HepG2 (cell line): ENCODE measurements at regions of chr9 and their contacts with region 1.

Region 1: DNA sequence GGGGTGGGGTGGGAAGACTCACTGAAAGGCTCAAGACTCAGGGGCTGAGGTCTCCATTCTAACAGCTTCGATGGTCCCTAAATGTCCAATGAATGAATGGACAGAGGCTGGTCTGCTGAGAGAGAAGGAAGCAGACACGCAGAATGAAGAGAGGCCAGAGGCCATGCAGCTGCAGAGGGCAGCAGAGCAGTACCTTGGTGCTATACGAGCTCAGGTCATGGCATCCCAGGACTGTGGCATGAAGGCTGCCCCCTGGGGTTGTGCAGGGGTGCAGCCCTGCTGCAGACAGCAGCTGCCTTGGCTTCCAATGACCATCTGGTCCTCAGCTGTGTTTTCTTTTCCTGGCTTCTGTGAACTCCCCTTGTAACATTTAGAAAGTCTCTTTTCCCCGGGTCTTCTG is 15.2 kb upstream of the CORO2A start:
- DNase-seq: no peak
- ATAC-seq: peak; percentile 29; the same call in 2 of the 3 replicates
- H3K4me3 ChIP-seq: no peak overlapping the region
- H3K27ac ChIP-seq: no peak overlapping the region
- H3K4me1 ChIP-seq: peaks cover 32% of the 10 kb centered on the region
- H3K27me3 ChIP-seq: no peaks in the 10 kb centered on the region
- CTCF ChIP-seq: peak; percentile 48
- EP300 ChIP-seq: no peak
- POLR2A ChIP-seq: no peak
- RAD21 ChIP-seq: no peak

Region 2: DNA sequence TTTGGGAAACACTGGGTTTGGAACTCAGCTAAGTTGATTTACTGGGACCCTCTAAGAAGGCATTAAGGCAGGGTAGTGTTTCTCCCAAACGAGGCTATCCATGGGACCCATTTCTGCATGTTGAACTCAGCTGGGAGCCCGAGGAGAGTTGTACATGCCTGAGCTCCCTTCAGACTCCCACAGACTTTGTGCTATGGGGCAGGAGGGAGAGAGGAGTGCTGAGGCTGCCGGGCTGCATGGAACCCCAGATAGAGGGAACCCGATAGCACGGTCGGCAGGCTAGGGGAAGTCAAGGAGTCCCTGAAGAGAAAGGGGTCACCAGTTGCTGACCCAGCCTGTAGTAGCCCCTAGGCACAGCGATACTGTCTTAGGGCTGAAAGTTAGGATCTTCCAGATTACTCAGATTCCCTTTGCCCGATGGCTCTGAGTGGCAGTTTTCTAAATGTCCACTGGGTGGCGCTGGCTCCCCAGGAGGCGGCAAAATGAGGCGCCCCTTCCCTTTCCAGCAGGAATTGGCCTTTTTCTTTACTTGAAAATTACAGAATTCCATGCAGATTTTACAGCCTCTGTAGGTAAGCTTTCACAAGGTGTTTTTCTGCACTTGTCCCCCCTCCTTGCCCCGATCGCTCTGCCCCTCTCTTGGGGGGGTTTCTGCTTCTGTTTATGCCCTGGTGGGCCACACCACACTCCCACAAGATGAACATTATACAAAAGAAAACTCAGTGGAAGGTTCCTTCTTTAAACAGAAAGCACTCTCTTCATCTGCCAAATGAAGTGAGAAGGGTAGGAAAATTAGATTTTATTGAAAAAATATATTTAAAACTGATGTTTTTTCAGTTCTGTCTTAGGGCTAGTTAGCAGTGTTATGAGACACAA is 133.3 kb before region 1 on chr9:
- CTCF ChIA-PET with region 1: interaction called, 7 read pairs
- POLR2A ChIA-PET with region 1: no interaction called
- in situ Hi-C with region 1: no loop called
- intact Hi-C with region 1: loop called (anchors 5 kb)
- DNase-seq: peak; percentile 36
- ATAC-seq: peak; percentile 73
- H3K4me3 ChIP-seq: no peak overlapping the region
- H3K27ac ChIP-seq: peak overlapping the region; percentile 29
- H3K4me1 ChIP-seq: peaks cover 42% of the 10 kb centered on the region
- H3K27me3 ChIP-seq: no peaks in the 10 kb centered on the region
- CTCF ChIP-seq: peak; percentile 87
- EP300 ChIP-seq: no peak
- POLR2A ChIP-seq: no peak
- RAD21 ChIP-seq: peak; percentile 74

Region 3: DNA sequence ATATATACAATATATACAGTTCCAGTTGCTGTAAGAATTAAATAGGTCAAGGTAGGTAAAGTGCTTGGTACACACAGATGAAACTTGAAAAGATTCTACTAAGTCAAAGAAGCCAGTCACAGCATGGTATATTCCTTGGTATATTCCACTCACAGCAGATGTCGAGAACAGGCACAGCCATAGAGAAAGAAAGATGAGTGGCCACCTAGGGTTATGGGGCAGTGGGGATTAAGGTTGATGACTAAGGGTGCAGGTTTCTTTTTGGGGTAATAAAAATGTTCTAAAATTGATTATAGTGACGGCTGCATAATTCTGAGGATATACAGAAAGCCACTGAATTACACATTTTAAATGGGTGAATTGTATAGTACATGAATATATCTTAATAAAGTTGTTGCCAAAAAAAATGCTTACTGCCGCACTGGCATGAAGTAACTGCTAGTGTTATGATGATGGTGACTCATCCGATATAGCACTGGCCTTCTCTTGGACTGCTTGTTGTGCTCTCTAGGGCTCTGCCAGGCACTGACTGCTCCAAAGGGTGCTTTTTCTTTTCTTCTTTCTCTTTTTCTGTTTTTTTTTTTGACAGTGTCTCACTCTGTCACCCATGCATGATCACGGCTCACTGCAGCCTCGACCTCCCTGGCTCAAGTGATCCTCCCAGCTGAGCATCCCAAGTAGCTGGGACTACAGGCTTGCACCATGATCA is 24.3 kb after region 1 on chr9:
- CTCF ChIA-PET with region 1: interaction called, 3 read pairs
- POLR2A ChIA-PET with region 1: interaction called, 14 read pairs
- in situ Hi-C with region 1: no loop called
- intact Hi-C with region 1: loop called (anchors 1 kb)
- DNase-seq: no peak
- ATAC-seq: no peak
- H3K4me3 ChIP-seq: no peak overlapping the region
- H3K27ac ChIP-seq: no peak overlapping the region
- H3K4me1 ChIP-seq: peaks cover 45% of the 10 kb centered on the region
- H3K27me3 ChIP-seq: no peaks in the 10 kb centered on the region
- CTCF ChIP-seq: no peak
- EP300 ChIP-seq: no peak
- POLR2A ChIP-seq: no peak
- RAD21 ChIP-seq: no peak

Region 4: GRCh38 chr9:98255578-98256296 is 48.1 kb after region 1 on chr9 and contains the start of gene TBC1D2:
- CTCF ChIA-PET with region 1: interaction called, 3 read pairs
- POLR2A ChIA-PET with region 1: interaction called, 12 read pairs
- in situ Hi-C with region 1: loop called (anchors 5 kb)
- intact Hi-C with region 1: no loop called
- DNase-seq: peak; percentile 85
- ATAC-seq: peak; percentile 93
- H3K4me3 ChIP-seq: peak within 1 kb of the TSS; percentile 88 to 92 (median 89)
- H3K27ac ChIP-seq: peak within 1 kb of the TSS; percentile 87
- H3K4me1 ChIP-seq: peaks cover 29% of the 10 kb centered on the region
- H3K27me3 ChIP-seq: no peaks in the 10 kb centered on the region; a peak in 1 of 5 replicates
- CTCF ChIP-seq: peak; percentile 27; the same call in 1 of the 2 replicates
- EP300 ChIP-seq: peak in 1 of 2 experiments; percentile 11; a peak in 1 of 4 replicates
- POLR2A ChIP-seq: peak; percentile 52 to 80; a peak in 3 of 4 replicates
- RAD21 ChIP-seq: no peak; the same call in 1 of the 2 replicates
- total RNA-seq, gene TBC1D2: 2.2 and 2.8 TPM in 2 replicates

Region 5: GRCh38 chr9:98263482-98264357 is 56.1 kb after region 1 on chr9:
- CTCF ChIA-PET with region 1: interaction called, 42 read pairs
- POLR2A ChIA-PET with region 1: no interaction called
- in situ Hi-C with region 1: loop called (anchors 5 kb)
- intact Hi-C with region 1: loop called (anchors 1 kb)
- DNase-seq: peak; percentile 61
- ATAC-seq: peak; percentile 100
- H3K4me3 ChIP-seq: no peak overlapping the region
- H3K27ac ChIP-seq: no peak overlapping the region
- H3K4me1 ChIP-seq: peaks cover 18% of the 10 kb centered on the region
- H3K27me3 ChIP-seq: peaks cover 0 to under 1% of the 10 kb centered on the region in 2 experiments; a peak in 1 of 5 replicates
- CTCF ChIP-seq: peak; percentile 95
- EP300 ChIP-seq: no peak
- POLR2A ChIP-seq: no peak
- RAD21 ChIP-seq: peak; percentile 88